ENCODE measurements at regions of chr3 and their contacts with region 1.

Region 1: GRCh38 chr3:4350789-4351163 is 47.6 kb downstream of the SETMAR start:
- H3K4me3 ChIP-seq: no peak overlapping the region
- H3K27ac ChIP-seq: no peak overlapping the region
- H3K4me1 ChIP-seq: peaks cover 3% of the 10 kb centered on the region; the same call in 1 of the 2 replicates
- CTCF ChIP-seq: peak; percentile 76

Region 2: GRCh38 chr3:3998140-3998922 is 352.4 kb before region 1 on chr3:
- CTCF ChIA-PET with region 1: no interaction called
- POLR2A ChIA-PET with region 1: no interaction called
- H3K4me3 ChIP-seq: no peak overlapping the region
- H3K27ac ChIP-seq: no peak overlapping the region
- H3K4me1 ChIP-seq: no peaks in the 10 kb centered on the region
- CTCF ChIP-seq: no peak

Region 3: DNA sequence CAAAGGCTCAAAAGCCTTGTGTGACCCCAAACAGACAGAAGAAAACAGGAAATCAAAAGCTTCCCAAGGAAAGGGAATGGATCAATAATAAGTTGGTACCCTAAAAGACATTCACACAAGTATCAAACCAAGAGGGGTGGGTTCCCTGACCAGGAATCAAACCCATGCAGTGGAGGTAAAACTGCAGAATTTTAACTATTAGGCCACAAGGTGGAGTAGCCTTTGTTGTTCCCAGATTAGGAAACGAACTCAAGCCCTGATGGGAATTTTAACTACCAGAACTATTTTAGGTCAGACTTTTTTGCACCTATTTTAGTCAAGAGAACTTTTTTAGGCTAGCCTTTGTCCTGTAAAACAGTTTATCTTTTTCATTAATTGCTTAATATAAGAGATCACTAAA is 16.2 kb before region 1 on chr3:
- CTCF ChIA-PET with region 1: interaction called, 11 read pairs
- POLR2A ChIA-PET with region 1: no interaction called
- H3K4me3 ChIP-seq: no peak overlapping the region
- H3K27ac ChIP-seq: no peak overlapping the region
- H3K4me1 ChIP-seq: no peaks in the 10 kb centered on the region
- CTCF ChIP-seq: no peak

Region 4: GRCh38 chr3:4340411-4341335 is 10.1 kb before region 1 on chr3:
- CTCF ChIA-PET with region 1: interaction called, 14 read pairs
- POLR2A ChIA-PET with region 1: no interaction called
- H3K4me3 ChIP-seq: no peak overlapping the region
- H3K27ac ChIP-seq: no peak overlapping the region
- H3K4me1 ChIP-seq: peaks cover 3% of the 10 kb centered on the region; the same call in 1 of the 2 replicates
- CTCF ChIP-seq: no peak

Region 5: DNA sequence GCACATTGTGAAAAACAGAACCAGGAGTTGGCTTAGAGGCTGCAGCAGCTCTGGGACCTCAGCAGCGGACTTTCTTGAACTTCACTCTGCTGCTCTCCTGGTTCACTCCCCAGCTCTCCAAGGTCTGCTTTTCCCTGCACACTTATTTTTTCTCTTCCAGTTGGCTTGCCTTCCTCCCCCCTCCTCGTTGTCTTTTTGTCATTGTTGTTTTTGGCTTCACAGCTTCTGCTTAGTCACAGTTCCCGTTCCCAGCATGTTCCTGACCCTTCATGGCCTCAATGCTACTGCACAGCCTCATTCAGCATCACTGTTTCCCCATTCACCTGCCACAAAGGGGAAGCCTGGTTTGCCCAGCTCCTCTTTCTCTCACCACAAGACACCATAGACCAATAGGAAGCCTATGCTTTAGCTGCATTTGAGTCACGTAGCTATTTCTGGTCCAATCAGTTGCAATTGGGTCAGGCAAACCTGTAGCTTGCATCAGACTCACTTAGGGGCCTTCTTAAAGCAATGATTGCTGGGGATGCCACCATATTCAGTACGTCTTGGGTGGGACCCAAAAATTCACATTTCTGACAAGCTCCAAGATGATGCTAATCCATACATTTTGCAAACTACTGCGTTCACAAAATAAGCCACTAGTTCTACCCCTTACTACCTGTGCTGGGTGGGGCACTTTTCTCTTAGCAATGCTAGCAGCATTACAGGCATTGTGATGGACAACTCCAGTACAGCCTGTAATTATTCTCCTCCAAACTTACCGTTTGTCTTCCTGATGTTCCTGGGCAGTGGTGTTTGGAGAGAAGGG is 124.1 kb after region 1 on chr3:
- CTCF ChIA-PET with region 1: no interaction called
- POLR2A ChIA-PET with region 1: no interaction called
- H3K4me3 ChIP-seq: no peak overlapping the region
- H3K27ac ChIP-seq: no peak overlapping the region
- H3K4me1 ChIP-seq: 0 out of 2 replicates have a peak, but pooled peaks cover 2% of the 10 kb centered on the region
- CTCF ChIP-seq: no peak

Region 6: GRCh38 chr3:4754180-4755086 is 403.7 kb after region 1 on chr3:
- CTCF ChIA-PET with region 1: no interaction called
- POLR2A ChIA-PET with region 1: no interaction called
- H3K4me3 ChIP-seq: no peak overlapping the region
- H3K27ac ChIP-seq: no peak overlapping the region
- H3K4me1 ChIP-seq: peaks cover 8% of the 10 kb centered on the region; the same call in 1 of the 2 replicates
- CTCF ChIP-seq: no peak